CD14-positive monocyte (primary cell): ENCODE measurements at regions of chr13 and their contacts with region 1.

Region 1: GRCh38 chr13:40653527-40654318 is 12.7 kb downstream of the FOXO1 start:
- DNase-seq: peak in 2 of 3 donors; percentile 22 to 48
- H3K4me3 ChIP-seq: peak overlapping the region in 1 of 3 experiments; percentile 35
- H3K4me3 Mint-ChIP-seq: peak overlapping the region in 1 of 2 donors; percentile 39
- H3K27ac ChIP-seq: peak overlapping the region in 1 of 2 donors; percentile 62
- H3K27ac Mint-ChIP-seq: peak overlapping the region; percentile 30 to 80 (median 50)
- H3K4me1 ChIP-seq: peaks cover 16 to 32% of the 10 kb centered on the region in 2 donors
- H3K4me1 Mint-ChIP-seq: peaks cover 56% of the 10 kb centered on the region
- H3K27me3 ChIP-seq: no peaks in the 10 kb centered on the region
- H3K27me3 Mint-ChIP-seq: peaks cover 0 to 4% (median 1%) of the 10 kb centered on the region in 3 donors
- CTCF ChIP-seq: peak; percentile 17

Region 2: DNA sequence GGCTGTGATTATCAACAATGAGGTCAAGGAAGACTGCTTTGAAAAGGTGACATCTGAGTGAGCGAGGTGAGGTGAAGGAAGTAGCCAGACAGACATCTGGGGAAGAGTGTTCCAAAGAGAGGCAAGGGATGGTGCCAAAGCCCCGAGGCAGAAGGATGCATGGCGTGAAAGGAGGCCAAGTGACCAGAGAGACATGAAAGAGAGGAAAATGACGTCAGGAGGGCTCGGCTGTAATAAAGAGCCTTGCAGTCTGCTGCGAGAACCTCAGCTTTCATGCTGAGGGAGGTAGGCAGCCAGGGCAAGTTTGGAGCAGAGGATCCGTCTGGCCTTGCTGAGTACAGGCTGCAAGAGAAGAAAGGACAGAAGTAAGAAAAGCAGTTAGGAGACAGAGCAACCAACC is 38.1 kb before region 1 on chr13:
- intact Hi-C with region 1: loop called in 1 of 2 experiments (anchors 5 kb)
- DNase-seq: no peak
- H3K4me3 ChIP-seq: no peak overlapping the region
- H3K4me3 Mint-ChIP-seq: no peak overlapping the region
- H3K27ac ChIP-seq: no peak overlapping the region
- H3K27ac Mint-ChIP-seq: peak overlapping the region in 1 of 7 donors; percentile 9
- H3K4me1 ChIP-seq: peaks cover 15 to 20% of the 10 kb centered on the region in 2 donors
- H3K4me1 Mint-ChIP-seq: peaks cover 28% of the 10 kb centered on the region
- H3K27me3 ChIP-seq: no peaks in the 10 kb centered on the region
- H3K27me3 Mint-ChIP-seq: peaks cover 0 to 5% (median 0%) of the 10 kb centered on the region in 3 donors
- CTCF ChIP-seq: no peak

Region 3: DNA sequence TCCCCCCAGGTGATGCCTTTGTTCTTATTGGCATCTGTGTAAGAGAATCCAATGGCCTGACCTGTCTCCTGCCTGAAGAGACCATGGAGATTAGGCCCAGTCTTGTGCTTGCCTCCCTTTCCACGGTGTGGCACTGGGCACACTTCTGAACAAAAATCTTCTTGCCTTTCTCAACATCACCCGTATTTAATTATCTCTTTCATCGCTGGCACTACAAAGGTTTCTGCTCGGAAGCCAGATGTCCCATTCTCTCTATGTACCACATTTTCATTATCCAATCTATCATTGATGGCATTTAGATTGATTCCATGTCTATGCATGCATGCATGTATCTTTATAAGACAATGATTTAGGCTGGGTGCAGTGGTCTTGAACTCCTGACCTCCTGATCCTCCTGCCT is 210.0 kb after region 1 on chr13:
- intact Hi-C with region 1: no loop called
- DNase-seq: no peak
- H3K4me3 ChIP-seq: no peak overlapping the region
- H3K4me3 Mint-ChIP-seq: no peak overlapping the region
- H3K27ac ChIP-seq: no peak overlapping the region
- H3K27ac Mint-ChIP-seq: no peak overlapping the region
- H3K4me1 ChIP-seq: no peaks in the 10 kb centered on the region
- H3K4me1 Mint-ChIP-seq: no peaks in the 10 kb centered on the region
- H3K27me3 ChIP-seq: no peaks in the 10 kb centered on the region
- H3K27me3 Mint-ChIP-seq: peaks cover 0 to 2% (median 0%) of the 10 kb centered on the region in 3 donors
- CTCF ChIP-seq: no peak